PC-9 (cell line): ENCODE measurements at regions of chr11 and their contacts with region 1.

Region 1: GRCh38 chr11:78344676-78345075 is 72.9 kb downstream of the GAB2 start:
- DNase-seq: peak in 1 of 2 experiments; percentile 29
- H3K4me3 ChIP-seq: no peak overlapping the region
- H3K27ac ChIP-seq: no peak overlapping the region
- H3K4me1 ChIP-seq: peaks cover 10% of the 10 kb centered on the region; the same call in 1 of the 2 replicates
- H3K27me3 ChIP-seq: no peaks in the 10 kb centered on the region
- CTCF ChIP-seq: no peak

Region 2: DNA sequence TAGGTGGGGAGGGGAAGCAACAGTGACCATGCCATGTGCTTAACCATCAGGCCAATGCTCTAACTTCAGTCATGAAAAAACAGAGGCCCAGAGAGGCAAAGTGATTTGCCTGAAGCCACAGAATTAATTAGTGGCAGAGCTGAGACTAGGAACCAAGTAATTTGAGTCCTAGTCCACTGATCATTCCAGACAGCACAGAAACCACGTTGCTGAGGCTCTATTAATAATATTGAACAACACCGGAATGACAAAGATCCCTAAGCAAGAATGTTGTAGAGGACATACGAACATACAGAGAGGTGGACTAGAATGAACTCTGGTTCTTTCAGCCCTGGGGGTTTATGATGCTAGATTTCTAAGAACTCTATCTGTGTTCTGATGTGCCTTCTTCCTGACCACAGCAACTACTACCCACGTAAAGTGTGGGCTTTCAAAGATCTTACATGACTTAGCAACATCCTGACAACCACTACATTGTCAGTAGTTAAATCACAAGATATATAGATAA is 19.3 kb before region 1 on chr11:
- CTCF ChIA-PET with region 1: no interaction called
- POLR2A ChIA-PET with region 1: no interaction called
- intact Hi-C with region 1: loop called (anchors 2 kb)
- DNase-seq: no peak
- H3K4me3 ChIP-seq: no peak overlapping the region
- H3K27ac ChIP-seq: no peak overlapping the region
- H3K4me1 ChIP-seq: no peaks in the 10 kb centered on the region
- H3K27me3 ChIP-seq: no peaks in the 10 kb centered on the region
- CTCF ChIP-seq: no peak

Region 3: GRCh38 chr11:78370406-78371172 is 25.9 kb after region 1 on chr11:
- CTCF ChIA-PET with region 1: no interaction called
- POLR2A ChIA-PET with region 1: no interaction called
- intact Hi-C with region 1: no loop called
- DNase-seq: peak in 1 of 2 experiments; percentile 22
- H3K4me3 ChIP-seq: no peak overlapping the region
- H3K27ac ChIP-seq: no peak overlapping the region
- H3K4me1 ChIP-seq: peaks cover 7% of the 10 kb centered on the region
- H3K27me3 ChIP-seq: no peaks in the 10 kb centered on the region
- CTCF ChIP-seq: no peak